HEK293 (cell line): ENCODE measurements at regions of chr3 and their contacts with region 1.

Region 1: DNA sequence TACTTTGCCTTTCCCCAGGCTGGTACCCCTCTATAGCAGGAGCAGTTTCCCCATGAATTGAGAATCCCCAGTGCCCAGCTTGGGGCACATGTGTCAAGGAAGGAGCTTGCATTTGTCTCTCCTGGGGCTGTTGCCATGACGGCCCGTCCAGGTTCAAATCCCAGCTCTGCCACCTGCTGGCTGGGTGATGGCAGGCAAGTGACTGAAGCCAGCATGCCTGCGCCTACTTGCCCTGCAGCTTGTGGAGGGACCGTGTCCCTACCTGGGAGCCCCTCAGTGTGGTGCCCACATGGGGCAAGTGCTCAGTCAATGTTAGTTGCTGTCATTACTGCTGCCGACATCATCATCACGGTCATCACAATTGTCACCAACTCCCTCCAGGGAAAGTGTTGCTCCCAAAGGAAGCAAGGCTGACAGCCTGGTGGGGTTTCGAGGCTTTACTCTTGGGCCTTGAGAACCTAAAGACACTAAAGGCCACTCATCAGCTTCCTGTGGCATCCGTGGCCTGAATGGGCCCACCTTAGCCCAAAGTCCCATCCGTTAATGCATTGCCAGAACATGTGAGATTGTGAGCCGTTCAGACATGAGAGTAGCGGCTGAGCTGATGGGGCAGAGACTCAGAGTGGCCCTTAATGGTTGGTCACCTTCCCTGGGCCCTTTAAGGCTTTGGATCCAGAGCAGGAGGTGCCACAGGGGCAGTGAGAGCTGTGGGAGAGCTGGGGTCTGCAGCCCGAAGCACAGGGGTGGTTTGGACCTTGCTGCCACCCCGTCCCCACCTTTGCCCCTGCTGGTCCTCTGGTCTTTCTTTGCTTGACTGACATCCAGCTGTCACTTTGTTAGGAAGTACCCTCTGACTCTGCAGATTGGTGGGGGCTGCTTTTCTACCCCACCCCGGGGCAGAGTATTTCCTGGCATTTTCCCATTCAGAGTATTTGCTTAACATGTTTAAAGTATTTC is 144.3 kb downstream of the DNAJB8 start:
- H3K4me3 ChIP-seq: no peak overlapping the region
- H3K27ac ChIP-seq: no peak overlapping the region
- H3K4me1 ChIP-seq: no peaks in the 10 kb centered on the region
- CTCF ChIP-seq: peak; percentile 27; the same call in 1 of the 2 replicates

Region 2: GRCh38 chr3:128226795-128227395 is 95.4 kb before region 1 on chr3:
- CTCF ChIA-PET with region 1: interaction called, 28 read pairs
- POLR2A ChIA-PET with region 1: no interaction called
- H3K4me3 ChIP-seq: no peak overlapping the region
- H3K27ac ChIP-seq: no peak overlapping the region
- H3K4me1 ChIP-seq: no peaks in the 10 kb centered on the region
- CTCF ChIP-seq: peak; percentile 41; the same call in 1 of the 2 replicates

Region 3: DNA sequence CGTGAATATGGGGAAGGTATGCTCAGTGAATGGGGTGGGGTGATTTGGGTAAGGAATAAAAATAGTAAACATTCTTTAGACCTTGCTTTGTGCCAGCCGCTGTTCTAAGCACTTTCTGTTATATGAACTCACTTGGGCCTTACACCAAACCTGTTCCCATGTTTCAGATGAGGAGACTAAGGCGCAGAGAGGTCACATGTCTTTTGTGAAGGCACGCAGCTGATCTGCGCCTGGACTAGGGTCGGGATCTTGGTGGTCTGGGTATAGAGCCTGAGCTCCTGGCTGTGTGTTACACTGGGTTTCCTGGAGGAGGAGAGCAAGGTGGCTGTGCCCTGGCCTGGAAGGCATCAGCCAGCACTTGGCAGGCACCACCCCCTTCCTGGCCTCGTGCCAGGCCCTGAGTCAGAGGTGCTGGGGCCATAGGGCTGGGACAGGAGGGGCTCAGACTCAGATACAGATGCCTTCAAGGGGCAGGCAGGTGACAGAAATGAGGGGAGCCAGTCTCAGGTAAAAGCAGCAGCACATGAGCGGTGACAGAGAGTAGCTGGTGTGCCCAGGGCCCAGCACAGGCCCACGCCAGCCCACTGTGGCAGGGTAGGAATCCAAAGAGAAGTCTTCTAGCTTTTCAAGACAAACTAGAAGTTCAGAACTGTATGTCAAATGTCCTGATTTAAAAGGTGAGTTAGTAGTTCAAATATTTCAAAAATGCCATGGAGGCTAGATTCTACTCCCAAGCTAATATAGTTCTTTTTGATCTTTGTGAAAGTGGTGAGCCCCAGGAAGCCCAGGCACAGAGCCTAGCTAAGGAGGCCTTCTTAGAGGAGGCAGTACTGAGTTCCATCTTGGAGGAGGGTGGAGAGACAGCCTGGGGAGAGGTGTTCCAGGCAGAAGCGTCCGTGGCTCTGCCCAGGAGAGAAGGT is 61.2 kb after region 1 on chr3:
- CTCF ChIA-PET with region 1: no interaction called
- POLR2A ChIA-PET with region 1: no interaction called
- H3K4me3 ChIP-seq: no peak overlapping the region
- H3K27ac ChIP-seq: peak overlapping the region; percentile 21; the same call in 1 of the 2 replicates
- H3K4me1 ChIP-seq: peaks cover 16% of the 10 kb centered on the region
- CTCF ChIP-seq: no peak